ENCODE measurements at regions of chr3 and their contacts with region 1.

Region 1: GRCh38 chr3:116757315-116757714 is 47.7 kb downstream of the TUSC7 start:
- DNase-seq: no peak
- H3K4me3 Mint-ChIP-seq: no peak overlapping the region
- H3K27ac Mint-ChIP-seq: no peak overlapping the region
- H3K4me1 Mint-ChIP-seq: no peaks in the 10 kb centered on the region
- H3K27me3 Mint-ChIP-seq: peaks cover 39% of the 10 kb centered on the region
- CTCF ChIP-seq: no peak

Region 2: GRCh38 chr3:115975353-115975752 is 782.0 kb before region 1 on chr3:
- CTCF ChIA-PET with region 1: no interaction called
- intact Hi-C with region 1: loop called (anchors 10 kb)
- DNase-seq: no peak
- H3K4me3 Mint-ChIP-seq: no peak overlapping the region
- H3K27ac Mint-ChIP-seq: peak overlapping the region; percentile 29
- H3K4me1 Mint-ChIP-seq: peaks cover 21% of the 10 kb centered on the region
- H3K27me3 Mint-ChIP-seq: no peaks in the 10 kb centered on the region
- CTCF ChIP-seq: no peak

Region 3: GRCh38 chr3:116464276-116464798 is 293.0 kb before region 1 on chr3:
- CTCF ChIA-PET with region 1: no interaction called
- intact Hi-C with region 1: loop called (anchors 10 kb)
- DNase-seq: no peak
- H3K4me3 Mint-ChIP-seq: no peak overlapping the region
- H3K27ac Mint-ChIP-seq: no peak overlapping the region
- H3K4me1 Mint-ChIP-seq: no peaks in the 10 kb centered on the region
- H3K27me3 Mint-ChIP-seq: no peaks in the 10 kb centered on the region
- CTCF ChIP-seq: no peak

Region 4: DNA sequence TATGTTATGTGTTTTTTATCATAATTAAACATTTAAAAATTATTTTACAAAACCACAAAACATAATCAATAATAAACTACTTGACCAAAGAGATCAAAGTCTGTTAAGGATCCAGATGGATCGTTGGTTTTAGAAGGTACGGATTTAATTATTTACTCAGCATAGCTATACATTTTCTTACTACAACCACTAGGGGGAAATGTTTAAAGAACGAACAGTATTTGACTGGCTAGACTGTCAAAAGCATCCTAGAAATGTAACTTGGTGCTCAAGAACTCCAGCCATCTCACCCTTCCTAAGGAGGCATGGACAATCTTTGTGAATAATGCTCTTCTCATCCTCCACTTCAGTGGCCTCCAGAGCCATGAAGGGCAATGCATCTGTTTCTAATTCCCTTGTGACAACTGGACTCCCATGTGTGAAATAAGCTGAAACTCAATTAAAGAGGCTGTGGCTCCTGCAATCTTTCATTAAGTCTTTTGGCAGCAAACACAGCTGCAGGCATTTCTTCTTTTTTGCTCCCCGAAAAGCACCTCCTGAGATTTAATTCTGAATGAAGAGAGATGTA is 142.4 kb before region 1 on chr3:
- CTCF ChIA-PET with region 1: interaction called, 3 read pairs
- intact Hi-C with region 1: loop called (anchors 2 kb)
- DNase-seq: no peak
- H3K4me3 Mint-ChIP-seq: no peak overlapping the region
- H3K27ac Mint-ChIP-seq: no peak overlapping the region
- H3K4me1 Mint-ChIP-seq: no peaks in the 10 kb centered on the region
- H3K27me3 Mint-ChIP-seq: peaks cover 47% of the 10 kb centered on the region
- CTCF ChIP-seq: peak; percentile 22

Region 5: DNA sequence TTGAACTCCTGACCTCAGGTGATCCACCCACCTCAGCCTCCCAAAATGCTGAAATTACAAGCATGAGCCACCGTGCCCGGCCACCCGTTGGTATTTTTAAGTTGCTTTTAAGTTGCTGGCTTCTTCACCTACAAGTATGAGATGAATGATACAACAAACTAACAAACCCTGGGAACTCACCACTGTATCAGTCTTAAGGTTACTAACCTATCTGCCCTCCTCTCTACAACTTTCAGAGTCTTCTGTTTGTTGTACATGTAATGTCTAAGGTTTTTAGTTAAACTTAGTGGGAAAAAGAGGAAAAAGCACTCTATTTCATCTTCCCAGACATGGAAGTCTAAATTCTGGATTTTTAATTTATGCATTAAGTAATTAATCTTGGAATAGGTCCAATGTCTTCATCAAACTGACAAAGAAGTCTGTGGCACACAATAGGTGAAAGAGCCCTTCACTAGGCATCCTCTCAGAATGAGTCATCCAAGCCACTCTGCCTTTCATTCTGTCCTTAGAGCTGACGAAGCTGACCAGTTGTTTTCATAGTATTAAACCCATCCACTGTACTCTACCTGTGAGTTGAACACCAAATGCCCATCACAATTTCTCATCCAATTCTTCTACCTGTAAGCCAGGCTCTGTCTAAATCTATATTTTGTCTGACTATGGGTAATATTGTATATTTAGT is 888.4 kb after region 1 on chr3:
- CTCF ChIA-PET with region 1: no interaction called
- intact Hi-C with region 1: no loop called
- DNase-seq: no peak
- H3K4me3 Mint-ChIP-seq: no peak overlapping the region
- H3K27ac Mint-ChIP-seq: no peak overlapping the region
- H3K4me1 Mint-ChIP-seq: no peaks in the 10 kb centered on the region
- H3K27me3 Mint-ChIP-seq: no peaks in the 10 kb centered on the region
- CTCF ChIP-seq: no peak

Measured in Calu3 (cell line).